OCI-LY7 (cell line): ENCODE measurements at regions of chr14 and their contacts with region 1.

Region 1: DNA sequence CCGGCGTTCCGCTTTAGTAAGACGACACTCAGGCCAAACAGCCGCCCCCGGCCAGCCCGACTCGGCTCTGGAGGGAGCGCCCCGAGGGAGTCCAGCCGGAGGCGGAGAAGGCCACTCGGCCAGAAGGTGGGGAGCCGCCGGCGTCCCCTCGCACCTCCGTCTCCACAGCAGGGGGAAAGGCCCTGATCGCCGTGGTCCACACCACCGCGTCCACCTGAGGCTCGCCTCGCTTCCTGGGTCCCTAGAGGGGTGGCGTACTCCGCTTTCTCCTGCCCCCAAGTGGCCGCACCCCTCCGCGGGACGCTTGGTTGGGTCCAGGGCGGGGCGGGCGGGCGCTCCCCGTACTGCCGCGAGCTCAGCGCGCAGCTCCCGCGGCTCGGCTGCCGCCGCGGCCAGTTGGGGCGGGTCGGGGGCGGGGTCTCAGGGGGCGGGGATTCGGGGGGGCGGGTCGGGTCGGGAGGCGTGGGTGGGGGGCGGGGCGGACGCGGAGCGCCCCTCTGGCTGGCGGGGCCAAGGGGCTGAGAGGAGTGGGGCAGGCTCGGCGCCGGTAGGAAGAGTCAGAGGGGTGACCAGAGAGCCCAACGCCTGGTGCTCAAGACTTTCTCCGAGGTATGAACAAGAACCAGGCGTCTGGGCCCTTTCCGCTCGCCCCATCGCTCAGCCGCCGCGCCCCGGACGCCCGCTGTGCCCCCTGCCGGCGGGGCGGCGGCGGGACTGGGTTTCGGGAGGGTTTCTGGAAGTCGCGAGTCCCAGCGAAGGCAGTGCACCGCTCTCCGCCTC is at the start of gene FRMD6:
- DNase-seq: peak; percentile 88
- H3K4me3 ChIP-seq: peak within 1 kb of the TSS; percentile 87
- H3K27ac ChIP-seq: peak within 1 kb of the TSS; percentile 78
- H3K4me1 ChIP-seq: peaks cover 31% of the 10 kb centered on the region
- CTCF ChIP-seq: peak; percentile 78
- total RNA-seq, gene FRMD6: 7.6 and 12.3 TPM in 2 replicates

Region 2: DNA sequence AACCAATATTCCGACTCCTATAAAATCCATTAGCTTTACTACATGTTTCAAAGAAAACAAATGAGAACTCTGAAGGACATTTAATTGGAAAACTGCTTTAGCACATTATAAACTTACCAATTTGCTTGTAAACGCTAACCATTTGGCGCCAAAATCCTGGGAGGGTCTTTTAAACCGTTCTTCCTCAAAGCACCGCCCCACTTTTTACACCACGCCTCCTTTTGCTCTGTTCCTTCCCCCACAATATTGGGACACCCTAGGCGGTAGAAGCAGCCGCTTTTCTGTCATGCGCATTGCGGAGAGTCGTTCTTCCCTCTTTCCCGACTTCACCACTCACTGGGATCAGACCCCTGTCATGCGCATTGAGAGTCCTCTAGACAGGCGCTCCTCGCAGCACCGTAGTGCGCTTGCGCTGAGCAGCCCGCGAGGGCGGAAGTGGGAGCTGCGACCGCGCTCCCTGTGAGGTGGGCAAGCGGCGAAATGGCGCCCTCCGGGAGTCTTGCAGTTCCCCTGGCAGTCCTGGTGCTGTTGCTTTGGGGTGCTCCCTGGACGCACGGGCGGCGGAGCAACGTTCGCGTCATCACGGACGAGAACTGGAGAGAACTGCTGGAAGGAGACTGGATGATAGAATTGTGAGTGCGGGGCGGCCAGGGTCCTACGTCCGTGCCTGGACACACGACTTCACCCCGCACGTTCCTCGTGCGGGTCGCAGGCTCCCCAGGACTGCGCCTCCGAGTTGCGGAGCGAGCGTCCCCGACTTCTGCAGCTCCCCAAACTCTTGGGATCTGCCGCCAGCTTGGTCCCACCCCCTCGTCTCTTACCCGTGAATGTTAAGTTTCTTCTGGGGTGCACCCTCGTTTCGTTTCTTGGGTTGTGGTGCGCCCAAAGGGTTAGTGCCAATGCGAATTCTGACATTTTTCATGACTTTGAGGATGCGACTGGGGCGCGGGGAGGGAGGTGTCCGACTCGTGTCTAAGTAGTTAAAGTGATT is 411.5 kb before region 1 on chr14 and contains the start of gene TMX1:
- CTCF ChIA-PET with region 1: no interaction called
- POLR2A ChIA-PET with region 1: interaction called, 8 read pairs
- intact Hi-C with region 1: loop called (anchors 5 kb)
- DNase-seq: peak; percentile 97
- H3K4me3 ChIP-seq: peak within 1 kb of the TSS; percentile 98
- H3K27ac ChIP-seq: peak within 1 kb of the TSS; percentile 60
- H3K4me1 ChIP-seq: peaks cover 44% of the 10 kb centered on the region
- CTCF ChIP-seq: peak; percentile 37; the same call in 1 of the 2 replicates
- total RNA-seq, gene TMX1: 33.6 and 34.3 TPM in 2 replicates

Region 3: GRCh38 chr14:51635951-51636503 is 15.6 kb before region 1 on chr14:
- CTCF ChIA-PET with region 1: no interaction called
- POLR2A ChIA-PET with region 1: no interaction called
- intact Hi-C with region 1: no loop called
- DNase-seq: no peak
- H3K4me3 ChIP-seq: no peak overlapping the region
- H3K27ac ChIP-seq: no peak overlapping the region
- H3K4me1 ChIP-seq: no peaks in the 10 kb centered on the region
- CTCF ChIP-seq: no peak